ENCODE measurements at regions of chr6 and their contacts with region 1.

Region 1: GRCh38 chr6:68876792-68877493 is 241.9 kb downstream of the ADGRB3 start:
- DNase-seq: peak; percentile 61
- H3K4me3 ChIP-seq: no peak overlapping the region
- H3K27ac ChIP-seq: peak overlapping the region; percentile 56
- H3K4me1 ChIP-seq: peaks cover 59% of the 10 kb centered on the region
- H3K27me3 ChIP-seq: no peaks in the 10 kb centered on the region
- CTCF ChIP-seq: peak; percentile 59

Region 2: DNA sequence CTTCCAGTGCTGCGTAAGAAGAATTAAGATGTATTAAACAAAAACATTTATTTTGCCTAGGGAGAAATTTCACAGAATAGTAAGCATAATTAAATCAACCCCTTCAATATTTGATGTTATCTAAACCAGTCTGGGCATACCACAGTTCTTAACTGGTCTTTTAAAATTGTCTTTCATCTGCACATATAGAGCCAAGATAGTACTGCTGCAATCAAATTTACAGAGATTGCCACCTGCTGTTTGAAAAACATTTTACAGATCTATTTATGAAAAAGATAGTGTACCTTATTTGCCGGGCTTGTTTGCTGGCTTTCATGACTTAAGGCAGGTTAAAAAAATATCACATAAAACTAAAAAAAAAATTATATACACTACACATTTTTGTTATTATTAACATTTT is 81.4 kb after region 1 on chr6:
- CTCF ChIA-PET with region 1: no interaction called
- POLR2A ChIA-PET with region 1: no interaction called
- intact Hi-C with region 1: loop called (anchors 5 kb)
- DNase-seq: peak; percentile 53
- H3K4me3 ChIP-seq: no peak overlapping the region
- H3K27ac ChIP-seq: no peak overlapping the region
- H3K4me1 ChIP-seq: no peaks in the 10 kb centered on the region
- H3K27me3 ChIP-seq: no peaks in the 10 kb centered on the region
- CTCF ChIP-seq: peak; percentile 48; the same call in 1 of the 2 replicates

Region 3: DNA sequence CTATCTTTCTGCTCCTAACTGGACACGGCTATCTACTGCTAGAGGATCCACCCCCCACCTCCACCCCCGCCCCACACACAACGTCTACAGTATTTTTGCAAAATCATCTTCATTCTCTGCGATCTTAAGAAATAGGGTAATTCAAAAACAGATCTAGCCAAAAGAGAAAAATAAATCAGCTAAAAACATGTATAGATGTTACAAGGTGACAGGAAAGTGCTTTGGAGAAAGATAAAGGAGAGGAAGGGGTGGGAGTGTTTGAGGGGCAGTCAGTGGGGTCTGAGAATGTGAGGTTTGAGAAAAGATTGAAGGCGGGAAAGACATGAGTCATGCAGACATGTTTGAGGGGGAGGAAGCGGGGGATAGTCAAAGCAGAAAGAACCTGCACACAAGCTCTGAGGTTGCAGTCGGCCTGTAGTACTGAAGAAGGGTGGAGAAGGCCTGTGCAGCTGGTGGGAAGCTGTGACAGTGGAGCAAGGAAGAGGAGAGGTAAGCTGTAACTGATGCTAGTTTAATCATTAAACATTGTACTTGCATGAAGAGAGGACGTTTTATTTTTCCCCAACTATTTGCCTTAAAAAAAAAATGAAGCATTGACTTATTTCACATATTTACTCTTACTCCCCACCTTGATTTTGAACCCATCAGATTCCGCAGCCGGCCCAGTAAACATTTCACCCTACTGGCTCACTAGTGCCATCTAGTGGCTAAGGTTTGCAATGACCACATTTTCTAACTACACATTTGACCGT is 90.8 kb after region 1 on chr6:
- CTCF ChIA-PET with region 1: no interaction called
- POLR2A ChIA-PET with region 1: no interaction called
- intact Hi-C with region 1: loop called (anchors 2 kb)
- DNase-seq: peak; percentile 84
- H3K4me3 ChIP-seq: no peak overlapping the region
- H3K27ac ChIP-seq: no peak overlapping the region
- H3K4me1 ChIP-seq: peaks cover 12% of the 10 kb centered on the region
- H3K27me3 ChIP-seq: no peaks in the 10 kb centered on the region
- CTCF ChIP-seq: peak; percentile 90

Region 4: GRCh38 chr6:69155467-69155866 is 278.5 kb after region 1 on chr6:
- CTCF ChIA-PET with region 1: no interaction called
- POLR2A ChIA-PET with region 1: no interaction called
- intact Hi-C with region 1: loop called (anchors 5 kb)
- DNase-seq: peak; percentile 23
- H3K4me3 ChIP-seq: no peak overlapping the region
- H3K27ac ChIP-seq: no peak overlapping the region
- H3K4me1 ChIP-seq: no peaks in the 10 kb centered on the region
- H3K27me3 ChIP-seq: no peaks in the 10 kb centered on the region
- CTCF ChIP-seq: 0 out of 2 replicates have a peak, but pooled peaks have one; percentile 27

Region 5: GRCh38 chr6:69390125-69390524 is 513.2 kb after region 1 on chr6:
- CTCF ChIA-PET with region 1: no interaction called
- POLR2A ChIA-PET with region 1: no interaction called
- intact Hi-C with region 1: loop called (anchors 10 kb)
- DNase-seq: no peak
- H3K4me3 ChIP-seq: no peak overlapping the region
- H3K27ac ChIP-seq: no peak overlapping the region
- H3K4me1 ChIP-seq: peaks cover under 1% of the 10 kb centered on the region
- H3K27me3 ChIP-seq: no peaks in the 10 kb centered on the region
- CTCF ChIP-seq: no peak

Region 6: GRCh38 chr6:69732640-69733039 is 855.7 kb after region 1 on chr6:
- CTCF ChIA-PET with region 1: no interaction called
- POLR2A ChIA-PET with region 1: no interaction called
- intact Hi-C with region 1: loop called (anchors 5 kb)
- DNase-seq: peak; percentile 45
- H3K4me3 ChIP-seq: no peak overlapping the region
- H3K27ac ChIP-seq: no peak overlapping the region
- H3K4me1 ChIP-seq: no peaks in the 10 kb centered on the region
- H3K27me3 ChIP-seq: no peaks in the 10 kb centered on the region
- CTCF ChIP-seq: peak; percentile 59

Region 7: DNA sequence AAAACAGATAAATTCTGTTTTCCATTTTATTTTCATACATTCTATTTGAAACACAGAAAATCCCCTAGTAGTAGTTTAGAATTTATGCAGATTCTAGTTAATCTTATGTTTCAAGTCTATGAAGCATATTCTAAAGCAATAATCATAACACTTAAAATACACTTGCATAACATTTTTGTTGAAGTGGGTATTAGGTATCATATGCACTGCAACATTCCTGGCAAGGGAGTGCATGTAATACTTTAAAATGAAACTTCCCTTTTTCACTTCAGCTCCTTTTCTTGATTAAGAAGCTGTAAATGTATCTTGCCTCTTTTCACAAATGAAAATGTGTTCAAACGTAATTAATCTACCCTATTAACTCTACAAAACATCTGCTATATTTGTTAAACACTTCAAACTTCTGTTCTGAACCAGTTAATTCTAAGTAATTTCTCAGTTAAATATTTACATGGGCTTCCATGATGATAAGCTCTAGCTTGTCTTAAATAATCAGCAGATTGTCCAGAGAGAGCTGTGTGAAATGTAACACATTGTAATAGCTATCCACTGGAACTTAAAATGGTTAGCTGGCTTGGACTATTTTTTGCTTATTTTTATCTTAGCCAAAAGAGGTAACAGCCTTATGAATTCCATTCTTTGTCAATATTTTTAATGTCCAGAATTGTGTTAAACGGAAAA is 1182.2 kb after region 1 on chr6:
- CTCF ChIA-PET with region 1: no interaction called
- POLR2A ChIA-PET with region 1: no interaction called
- intact Hi-C with region 1: no loop called
- DNase-seq: no peak
- H3K4me3 ChIP-seq: no peak overlapping the region
- H3K27ac ChIP-seq: no peak overlapping the region
- H3K4me1 ChIP-seq: no peaks in the 10 kb centered on the region
- H3K27me3 ChIP-seq: no peaks in the 10 kb centered on the region
- CTCF ChIP-seq: no peak

Measured in A673 (cell line).